Cardiac septum (tissue), 1 donor: ENCODE measurements at regions of chr17 and their contacts with region 1.

Region 1: DNA sequence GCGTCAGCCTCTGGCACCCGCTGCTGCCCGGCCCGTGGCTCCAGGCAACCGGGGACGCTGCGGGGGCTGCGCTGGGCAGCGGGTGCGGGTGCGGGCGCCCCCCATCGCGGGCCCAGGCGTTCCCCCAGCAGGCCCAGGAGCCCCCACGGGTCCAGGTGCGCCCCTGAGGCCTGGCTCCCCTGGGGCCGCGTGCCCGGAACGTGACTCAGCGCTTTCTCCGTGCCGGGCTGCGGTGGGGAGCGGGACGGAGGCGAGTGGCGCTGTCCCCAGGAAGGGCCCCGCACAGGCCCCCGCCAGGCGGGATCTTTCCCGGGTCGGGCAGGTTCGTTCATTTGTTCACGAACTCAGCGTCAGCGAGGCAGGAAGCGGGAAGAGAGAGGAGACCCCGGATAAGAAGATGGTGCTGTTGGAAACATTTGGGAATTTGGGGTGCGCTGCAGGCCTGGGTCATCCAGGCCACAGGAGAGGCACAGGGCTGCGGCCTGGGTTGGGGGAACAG is 18.4 kb upstream of the EXOC7 start:
- DNase-seq: no peak

Region 2: DNA sequence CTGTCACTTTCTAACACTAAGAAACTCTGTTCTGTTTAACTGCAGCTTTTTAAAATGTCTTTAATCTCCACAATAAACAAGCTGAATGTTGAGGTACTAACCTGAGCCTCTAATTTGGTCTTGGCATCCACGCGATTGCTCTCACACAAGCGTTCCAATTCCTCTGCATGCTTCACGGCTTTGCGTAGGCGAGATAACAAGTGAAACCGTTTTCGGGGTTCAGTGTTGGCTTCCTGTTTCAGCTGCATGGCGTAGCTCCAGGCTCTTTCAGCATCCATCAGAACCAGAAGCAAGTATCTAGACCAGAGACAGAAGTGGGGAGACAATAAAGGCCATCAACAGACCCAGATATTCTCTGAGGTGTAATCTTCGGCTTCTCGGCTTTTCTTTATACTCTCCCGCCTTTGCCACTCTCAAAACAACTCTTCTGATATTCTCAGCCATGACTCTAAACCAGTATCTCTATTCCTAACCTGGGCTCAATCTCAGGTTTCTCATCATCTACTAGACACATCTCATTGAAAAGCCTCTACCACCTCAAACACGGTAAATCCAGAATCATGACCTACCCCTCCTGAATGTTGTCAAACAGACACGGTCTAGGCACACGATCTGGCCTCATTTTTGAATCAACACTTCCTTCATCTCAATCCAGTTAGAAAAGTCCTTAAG is 58.0 kb before region 1 on chr17:
- intact Hi-C with region 1: no loop called
- DNase-seq: no peak

Region 3: GRCh38 chr17:76103274-76104139 is 18.5 kb before region 1 on chr17 and contains the start of gene EXOC7:
- intact Hi-C with region 1: no loop called
- DNase-seq: peak; percentile 98
- total RNA-seq, gene EXOC7: 86.9 TPM

Region 4: DNA sequence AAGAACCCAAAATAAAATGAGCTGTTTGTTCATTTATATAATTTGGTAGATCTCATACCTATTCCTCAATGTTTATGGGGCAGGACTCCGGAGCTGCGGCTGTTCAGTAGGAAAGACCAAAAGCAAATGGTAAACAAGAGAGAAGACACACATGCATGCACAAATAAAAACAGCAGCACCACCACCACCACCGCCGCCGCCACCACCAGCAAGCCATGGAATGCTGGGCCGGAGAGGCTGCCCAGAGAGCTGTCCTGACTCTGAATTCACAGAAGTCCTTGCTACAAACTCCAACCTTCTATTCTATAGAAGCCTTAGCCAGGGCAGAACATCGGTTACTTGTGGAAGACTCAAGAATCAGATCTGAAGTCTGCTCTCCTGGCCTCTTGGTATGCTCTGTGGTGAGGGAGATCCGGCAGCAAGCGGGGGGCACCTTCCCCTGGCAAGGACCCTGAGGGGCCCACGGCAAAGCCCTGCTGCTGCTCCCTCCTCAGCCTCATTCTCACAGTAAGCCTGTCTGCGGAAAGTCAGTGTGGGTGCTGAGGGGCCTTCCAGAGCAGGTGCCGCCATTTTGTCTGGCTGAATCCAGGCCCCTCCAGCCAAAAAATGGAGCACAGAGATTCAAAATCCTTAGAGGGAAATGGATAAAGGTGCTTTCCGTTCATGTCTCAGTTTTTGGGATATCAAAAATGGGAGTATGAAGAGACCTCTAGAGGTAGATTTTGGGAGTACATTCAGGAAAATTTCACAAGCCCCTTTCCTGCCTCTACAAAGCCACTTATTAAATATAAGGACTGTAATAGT is 25.4 kb after region 1 on chr17:
- intact Hi-C with region 1: loop called (anchors 2 kb)
- DNase-seq: no peak

Region 5: DNA sequence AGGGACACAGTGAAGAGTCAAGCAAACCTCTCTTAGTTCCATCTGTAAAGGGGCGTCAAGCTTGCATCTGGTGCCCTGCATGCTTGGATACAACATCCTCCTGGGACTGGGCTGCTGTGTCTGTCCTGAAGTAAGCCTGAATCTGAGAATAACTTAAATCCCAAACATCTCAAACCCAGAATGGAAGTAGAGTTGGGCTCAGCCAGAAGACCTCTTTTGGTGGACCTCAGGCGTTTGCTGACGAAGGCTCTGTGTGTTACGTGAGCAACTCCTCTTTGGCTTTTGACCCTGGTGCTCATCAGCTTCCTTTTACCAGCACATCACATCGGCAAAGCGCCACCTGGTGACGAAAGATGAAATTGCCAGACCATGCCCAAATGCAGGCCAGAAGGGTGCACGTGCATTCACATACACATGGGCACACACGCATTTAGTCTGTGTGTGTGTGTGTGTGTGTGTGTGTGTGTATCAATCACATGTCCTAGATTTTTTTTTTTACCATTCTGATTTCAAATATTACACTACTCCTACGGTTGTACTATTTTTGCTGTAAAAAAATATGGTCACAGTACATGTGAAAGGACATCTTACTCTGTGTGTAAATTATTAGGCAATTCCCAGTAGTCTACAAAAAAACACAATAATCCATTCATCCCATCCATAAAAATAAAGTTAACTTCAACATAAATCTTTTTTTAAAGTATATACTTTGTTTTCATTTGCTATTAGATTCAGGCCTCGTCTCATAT is 60.2 kb after region 1 on chr17:
- intact Hi-C with region 1: loop called (anchors 2 kb)
- DNase-seq: peak; percentile 92

Region 6: DNA sequence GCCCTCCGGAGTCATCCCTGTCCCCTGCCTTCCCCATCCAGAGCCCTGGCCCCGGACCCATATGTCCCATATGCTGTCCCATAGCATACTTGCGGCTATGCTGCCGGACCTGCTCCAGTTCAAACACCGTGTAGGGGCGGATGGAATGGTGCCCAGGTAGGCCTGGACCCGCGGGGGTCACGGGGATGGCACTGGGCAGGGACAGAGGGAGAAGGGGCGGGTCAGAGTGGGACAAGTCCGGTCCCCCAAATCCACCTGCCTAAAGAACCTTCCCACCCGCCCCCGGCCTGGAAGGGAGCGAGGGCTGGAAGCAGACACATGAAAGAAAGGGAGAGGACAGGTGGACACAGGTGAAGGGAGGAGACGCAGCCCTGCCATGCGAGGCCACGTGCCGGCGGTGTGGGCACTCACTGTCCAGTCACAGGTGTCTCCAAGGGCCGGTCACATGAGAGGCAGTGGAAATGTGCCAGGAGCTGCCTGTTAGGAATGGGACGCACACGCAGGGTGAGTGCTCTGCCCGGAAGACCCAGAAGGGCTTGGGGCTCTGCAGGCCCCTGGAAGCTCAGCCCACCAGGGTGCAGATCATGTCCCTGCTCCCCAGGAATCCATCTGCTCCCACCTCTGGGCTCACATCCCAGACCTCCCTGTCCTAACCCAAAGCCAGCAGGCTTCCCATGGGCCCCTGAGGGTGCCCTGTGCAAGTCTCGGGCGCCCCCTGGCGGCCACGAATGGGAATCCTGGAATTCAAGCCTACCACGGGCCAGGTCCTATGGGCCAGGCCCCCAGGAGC is 157.2 kb after region 1 on chr17:
- intact Hi-C with region 1: loop called (anchors 1 kb)
- DNase-seq: peak; percentile 93